Dendritic cell treated with granulocyte-macrophage colony-stimulating factor and Interleukin-4, amounts not matched to agents 40 ng/mL and 50 ng/mL, for 4 days (primary cell): ENCODE measurements at regions of chr6 and their contacts with region 1.

Region 1: GRCh38 chr6:144215932-144216667 is 65.8 kb downstream of the STX11 start:
- H3K4me3 Mint-ChIP-seq: peak overlapping the region; percentile 87
- H3K27ac Mint-ChIP-seq: peak overlapping the region; percentile 93
- H3K4me1 Mint-ChIP-seq: peaks cover 35% of the 10 kb centered on the region
- H3K27me3 Mint-ChIP-seq: no peaks in the 10 kb centered on the region

Region 2: GRCh38 chr6:144013486-144013909 is 202.6 kb before region 1 on chr6:
- intact Hi-C with region 1: no loop called
- H3K4me3 Mint-ChIP-seq: no peak overlapping the region
- H3K27ac Mint-ChIP-seq: no peak overlapping the region
- H3K4me1 Mint-ChIP-seq: peaks cover 18% of the 10 kb centered on the region
- H3K27me3 Mint-ChIP-seq: peaks cover 1% of the 10 kb centered on the region

Region 3: GRCh38 chr6:144149891-144150709 is 66.0 kb before region 1 on chr6 and contains the start of gene STX11:
- intact Hi-C with region 1: loop called (anchors 1 kb)
- H3K4me3 Mint-ChIP-seq: peak within 1 kb of the TSS; percentile 80
- H3K27ac Mint-ChIP-seq: peak within 1 kb of the TSS; percentile 91
- H3K4me1 Mint-ChIP-seq: peaks cover 42% of the 10 kb centered on the region
- H3K27me3 Mint-ChIP-seq: no peaks in the 10 kb centered on the region

Region 4: DNA sequence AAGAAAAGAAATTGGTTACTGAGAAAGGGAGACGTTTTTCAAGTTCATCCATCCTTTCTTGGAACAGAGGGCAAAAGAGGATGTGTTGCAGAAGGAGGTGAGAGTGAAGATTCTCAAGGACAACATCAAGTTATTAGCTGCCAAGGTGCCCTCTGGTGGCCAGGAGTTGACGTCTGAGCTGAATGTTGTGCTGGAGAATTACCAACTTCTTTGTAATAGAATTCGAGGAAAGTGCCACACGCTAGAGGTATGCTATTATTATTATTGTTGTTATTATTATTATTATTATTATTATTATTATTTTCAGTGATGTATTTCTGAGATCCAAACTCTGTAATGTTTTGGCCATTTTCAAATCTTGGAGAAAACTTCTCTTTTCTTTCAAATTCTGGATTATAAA is 266.0 kb after region 1 on chr6:
- intact Hi-C with region 1: loop called (anchors 5 kb)
- H3K4me3 Mint-ChIP-seq: no peak overlapping the region
- H3K27ac Mint-ChIP-seq: no peak overlapping the region
- H3K4me1 Mint-ChIP-seq: no peaks in the 10 kb centered on the region
- H3K27me3 Mint-ChIP-seq: no peaks in the 10 kb centered on the region